Activated naive CD4-positive, alpha-beta T cell treated with anti-CD3 and anti-CD28 coated beads for 36 hours (primary cell): ENCODE measurements at regions of chr16 and their contacts with region 1.

Region 1: GRCh38 chr16:4693296-4693955 is at the start of gene NUDT16L1:
- DNase-seq: peak; percentile 96
- H3K4me3 Mint-ChIP-seq: peak within 1 kb of the TSS; percentile 83
- H3K27ac Mint-ChIP-seq: peak within 1 kb of the TSS; percentile 65
- H3K4me1 Mint-ChIP-seq: peaks cover 14% of the 10 kb centered on the region
- H3K27me3 Mint-ChIP-seq: no peaks in the 10 kb centered on the region
- total RNA-seq, gene NUDT16L1: 20.0 to 20.7 TPM

Region 2: GRCh38 chr16:4425378-4426020 is 267.9 kb before region 1 on chr16 and contains the start of gene DNAJA3:
- CTCF ChIA-PET with region 1: no interaction called
- intact Hi-C with region 1: loop called (anchors 2 kb)
- DNase-seq: peak; percentile 93
- H3K4me3 Mint-ChIP-seq: peak within 1 kb of the TSS; percentile 99
- H3K27ac Mint-ChIP-seq: peak within 1 kb of the TSS; percentile 100
- H3K4me1 Mint-ChIP-seq: peaks cover 39% of the 10 kb centered on the region
- H3K27me3 Mint-ChIP-seq: no peaks in the 10 kb centered on the region
- total RNA-seq, gene DNAJA3: 86.7 to 88.0 TPM

Region 3: GRCh38 chr16:4574919-4575705 is 118.3 kb before region 1 on chr16:
- CTCF ChIA-PET with region 1: no interaction called
- intact Hi-C with region 1: no loop called
- DNase-seq: no peak
- H3K4me3 Mint-ChIP-seq: no peak overlapping the region
- H3K27ac Mint-ChIP-seq: no peak overlapping the region
- H3K4me1 Mint-ChIP-seq: no peaks in the 10 kb centered on the region
- H3K27me3 Mint-ChIP-seq: no peaks in the 10 kb centered on the region

Region 4: DNA sequence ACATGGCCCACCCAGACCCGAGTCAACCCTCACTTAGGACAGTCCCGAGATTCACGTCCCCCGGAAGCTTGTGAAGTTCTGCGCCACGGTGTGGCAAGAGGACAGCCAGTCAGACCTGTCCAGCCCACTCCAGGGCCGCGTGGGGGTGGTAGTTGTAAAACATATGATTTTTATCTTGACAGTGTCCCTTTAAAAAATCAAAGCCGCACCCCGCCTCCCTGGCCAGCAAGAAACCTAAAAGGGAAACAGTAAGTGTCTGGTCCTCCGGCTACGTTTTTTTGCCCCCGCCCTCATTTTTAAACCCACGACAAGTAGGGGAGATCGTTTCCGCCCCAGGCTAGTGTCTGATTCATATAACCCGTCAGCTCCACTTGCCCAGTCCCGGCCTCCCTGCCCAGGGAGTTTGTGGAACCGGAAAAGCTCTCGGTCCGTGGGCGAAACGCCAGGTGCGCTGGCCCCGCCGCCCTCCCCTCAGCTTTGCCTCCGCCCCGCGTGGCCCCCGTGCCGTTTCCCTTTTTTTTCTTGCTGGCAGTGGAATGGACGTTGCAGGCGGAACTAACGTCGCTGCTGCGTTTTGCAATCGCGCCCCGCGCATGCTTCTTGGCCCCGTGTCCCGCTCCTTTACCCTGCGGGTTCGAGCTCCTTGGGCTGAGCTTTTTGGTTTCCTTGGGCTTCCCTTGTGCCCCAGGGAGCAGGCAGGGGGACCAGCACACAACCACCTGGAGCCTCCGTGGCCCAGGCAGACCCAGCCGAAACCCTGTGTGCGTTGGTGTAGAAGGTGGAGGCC is 13.4 kb before region 1 on chr16:
- CTCF ChIA-PET with region 1: interaction called, 5 read pairs
- intact Hi-C with region 1: loop called (anchors 1 kb)
- DNase-seq: no peak
- H3K4me3 Mint-ChIP-seq: no peak overlapping the region
- H3K27ac Mint-ChIP-seq: no peak overlapping the region
- H3K4me1 Mint-ChIP-seq: peaks cover 26% of the 10 kb centered on the region
- H3K27me3 Mint-ChIP-seq: no peaks in the 10 kb centered on the region

Region 5: GRCh38 chr16:4709481-4709880 is 16.1 kb after region 1 on chr16:
- CTCF ChIA-PET with region 1: no interaction called
- intact Hi-C with region 1: no loop called
- DNase-seq: no peak
- H3K4me3 Mint-ChIP-seq: no peak overlapping the region
- H3K27ac Mint-ChIP-seq: no peak overlapping the region
- H3K4me1 Mint-ChIP-seq: no peaks in the 10 kb centered on the region
- H3K27me3 Mint-ChIP-seq: no peaks in the 10 kb centered on the region